ENCODE measurements at regions of chr1 and their contacts with region 1.

Region 1: GRCh38 chr1:161117759-161118581 is at the starts of genes NIT1 and PFDN2:
- DNase-seq: peak; percentile 86
- H3K4me3 ChIP-seq: peak within 1 kb of the TSS; percentile 21 to 100 (median 65)
- H3K27ac ChIP-seq: peak within 1 kb of the TSS; percentile 66
- H3K4me1 ChIP-seq: peaks cover 43% of the 10 kb centered on the region
- H3K27me3 ChIP-seq: no peaks in the 10 kb centered on the region
- CTCF ChIP-seq: no peak
- POLR2A ChIP-seq: peak; percentile 88
- total RNA-seq, gene NIT1: 20.3 and 20.9 TPM in 2 replicates
- total RNA-seq, gene PFDN2: 99.5 and 104 TPM in 2 replicates

Region 2: GRCh38 chr1:161132410-161133219 is 14.6 kb after region 1 on chr1 and contains the start of gene DEDD:
- CTCF ChIA-PET with region 1: interaction called, 5 read pairs
- POLR2A ChIA-PET with region 1: interaction called, 11 read pairs
- dilution Hi-C with region 1: no loop called
- intact Hi-C with region 1: loop called (anchors 1 kb)
- DNase-seq: peak; percentile 97
- H3K4me3 ChIP-seq: peak within 1 kb of the TSS; percentile 90 to 100 (median 94)
- H3K27ac ChIP-seq: peak within 1 kb of the TSS; percentile 85
- H3K4me1 ChIP-seq: peaks cover 26% of the 10 kb centered on the region
- H3K27me3 ChIP-seq: no peaks in the 10 kb centered on the region
- CTCF ChIP-seq: peak; percentile 1 to 4
- POLR2A ChIP-seq: no peak
- total RNA-seq, gene DEDD: 50.2 and 54.9 TPM in 2 replicates

Region 3: GRCh38 chr1:161153679-161154426 is 35.9 kb after region 1 on chr1 and contains the start of gene UFC1:
- CTCF ChIA-PET with region 1: no interaction called
- POLR2A ChIA-PET with region 1: no interaction called
- dilution Hi-C with region 1: no loop called
- intact Hi-C with region 1: loop called (anchors 1 kb)
- DNase-seq: peak; percentile 91
- H3K4me3 ChIP-seq: peak within 1 kb of the TSS; percentile 24 to 77 (median 52)
- H3K27ac ChIP-seq: peak within 1 kb of the TSS; percentile 81
- H3K4me1 ChIP-seq: no peaks in the 10 kb centered on the region
- H3K27me3 ChIP-seq: no peaks in the 10 kb centered on the region
- CTCF ChIP-seq: no peak
- POLR2A ChIP-seq: peak; percentile 86
- total RNA-seq, gene UFC1: 102 and 110 TPM in 2 replicates

Region 4: DNA sequence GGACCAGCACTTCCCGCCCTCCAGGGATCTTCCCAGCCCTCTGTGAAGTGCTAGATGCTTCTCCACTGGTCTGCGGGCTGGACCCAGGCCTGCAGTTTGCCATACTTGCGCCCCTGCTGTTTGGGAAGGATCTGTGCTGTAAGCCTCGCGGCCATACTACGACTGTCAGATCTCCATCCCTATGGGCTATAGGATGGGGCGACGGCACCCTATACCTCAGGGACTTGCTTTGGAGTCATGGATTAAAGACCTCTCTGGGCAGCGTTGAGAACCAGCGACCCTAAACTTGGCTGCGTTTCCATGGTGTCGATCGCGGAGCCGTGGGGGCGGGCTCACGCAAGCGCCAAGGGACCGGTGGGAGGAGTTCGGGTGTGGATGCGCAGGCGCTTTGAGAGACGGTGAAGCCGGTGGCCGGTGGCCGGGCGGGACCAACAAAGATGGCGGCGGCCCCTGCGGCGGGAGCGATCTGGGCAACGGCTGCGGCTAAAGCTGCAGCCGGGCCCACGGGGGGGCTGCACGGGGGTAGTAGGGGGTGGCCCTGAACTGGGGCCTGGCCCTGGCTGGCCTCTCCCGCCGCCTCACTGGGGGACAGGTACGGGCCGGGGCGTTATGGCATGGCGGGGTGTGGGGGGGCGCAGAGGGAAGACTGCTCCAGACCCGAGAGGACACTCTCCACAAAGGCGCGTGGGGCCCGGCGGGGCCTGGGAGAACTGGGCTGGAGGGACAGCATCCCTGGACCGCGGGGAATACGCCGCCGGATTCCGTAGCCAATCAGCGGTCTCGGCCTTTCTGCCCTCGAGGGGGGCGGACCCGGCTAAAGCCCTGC is 41.3 kb after region 1 on chr1 and contains the start of gene USP21:
- CTCF ChIA-PET with region 1: no interaction called
- POLR2A ChIA-PET with region 1: no interaction called
- dilution Hi-C with region 1: no loop called
- intact Hi-C with region 1: loop called (anchors 2 kb)
- DNase-seq: peak; percentile 91
- H3K4me3 ChIP-seq: peak within 1 kb of the TSS; percentile 51 to 76 (median 65)
- H3K27ac ChIP-seq: peak within 1 kb of the TSS; percentile 26
- H3K4me1 ChIP-seq: peaks cover 7% of the 10 kb centered on the region
- H3K27me3 ChIP-seq: no peaks in the 10 kb centered on the region
- CTCF ChIP-seq: peak in 1 of 2 donors; percentile 8
- POLR2A ChIP-seq: peak; percentile 74
- total RNA-seq, gene USP21: 18.7 and 19.7 TPM in 2 replicates

Region 5: DNA sequence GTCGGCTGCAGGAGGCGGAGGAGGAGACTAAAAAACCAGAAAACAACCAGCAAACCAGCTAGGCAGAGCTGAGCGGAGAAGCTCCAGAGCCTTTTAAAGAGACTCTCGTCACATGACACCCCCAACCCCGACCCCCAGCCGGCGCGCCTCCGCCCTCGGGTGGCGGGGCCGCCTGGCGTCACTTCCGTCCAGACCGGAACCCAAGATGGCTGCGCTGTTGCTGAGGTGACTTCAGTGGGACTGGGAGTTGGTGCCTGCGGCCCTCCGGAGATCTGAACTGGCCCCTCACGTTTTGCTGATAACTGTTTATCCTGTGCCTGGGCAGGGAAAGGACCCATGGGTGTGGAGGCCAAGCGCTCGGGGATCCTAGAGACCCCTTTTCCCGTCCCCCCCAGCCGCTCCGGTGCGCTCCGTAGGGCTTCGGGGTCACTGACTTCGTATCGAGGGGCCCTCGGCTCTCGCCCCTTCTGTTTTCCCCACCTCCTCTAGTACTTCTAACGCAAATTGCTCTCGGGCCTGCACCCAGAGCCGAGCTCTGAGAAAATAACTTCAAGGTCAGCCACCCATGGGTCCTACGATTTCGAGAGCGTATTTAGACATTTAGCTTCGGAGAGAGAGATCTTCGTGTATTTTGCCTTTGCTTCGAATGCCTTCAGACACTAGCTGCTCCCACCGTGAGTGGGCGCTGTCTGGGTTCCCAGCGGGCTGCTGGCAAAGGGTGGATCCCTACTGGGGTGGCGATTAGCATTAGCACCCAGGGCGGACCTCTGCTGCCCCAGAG is 196.4 kb after region 1 on chr1 and contains the start of gene SDHC:
- CTCF ChIA-PET with region 1: no interaction called
- POLR2A ChIA-PET with region 1: no interaction called
- dilution Hi-C with region 1: no loop called
- intact Hi-C with region 1: loop called (anchors 5 kb)
- DNase-seq: peak; percentile 92
- H3K4me3 ChIP-seq: peak within 1 kb of the TSS; percentile 45 to 100 (median 80)
- H3K27ac ChIP-seq: peak within 1 kb of the TSS; percentile 93
- H3K4me1 ChIP-seq: peaks cover 9% of the 10 kb centered on the region
- H3K27me3 ChIP-seq: no peaks in the 10 kb centered on the region
- CTCF ChIP-seq: peak; percentile 39 to 64
- POLR2A ChIP-seq: peak; percentile 98
- total RNA-seq, gene SDHC: 136 and 148 TPM in 2 replicates